ENCODE measurements at regions of chr2 and their contacts with region 1.

Region 1: DNA sequence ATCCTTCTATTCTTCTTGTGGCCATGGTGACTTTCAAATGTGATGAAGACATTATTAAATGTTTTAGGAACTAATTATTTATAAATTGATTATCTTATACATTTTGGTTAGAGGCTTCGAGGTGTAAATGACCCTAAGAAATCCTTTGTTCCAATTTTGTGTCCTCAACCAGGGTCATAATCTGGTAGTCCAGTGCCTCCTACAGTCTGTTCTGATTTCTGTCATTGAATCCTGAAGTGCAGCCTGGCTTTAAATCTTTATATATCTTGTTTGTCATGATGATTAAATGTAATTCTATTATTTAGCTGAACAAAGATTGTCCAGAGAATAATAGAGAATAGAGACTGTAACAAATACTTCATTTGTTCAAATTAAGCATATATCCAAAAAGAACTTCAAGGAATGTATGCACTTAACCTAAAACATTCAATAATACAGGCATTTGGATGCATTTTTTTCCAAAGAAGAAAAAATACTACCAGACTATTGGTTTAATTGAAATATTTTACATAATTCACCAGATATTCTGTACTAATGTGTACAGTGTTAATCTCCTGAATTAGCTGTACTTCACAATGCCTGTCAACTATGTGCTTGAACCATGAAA is 89.8 kb downstream of the PRPF40A start:
- DNase-seq: peak; percentile 64
- H3K4me3 ChIP-seq: no peak overlapping the region
- H3K27ac ChIP-seq: no peak overlapping the region
- H3K4me1 ChIP-seq: no peaks in the 10 kb centered on the region
- H3K27me3 ChIP-seq: no peaks in the 10 kb centered on the region
- CTCF ChIP-seq: peak; percentile 43 to 46
- POLR2A ChIP-seq: no peak

Region 2: DNA sequence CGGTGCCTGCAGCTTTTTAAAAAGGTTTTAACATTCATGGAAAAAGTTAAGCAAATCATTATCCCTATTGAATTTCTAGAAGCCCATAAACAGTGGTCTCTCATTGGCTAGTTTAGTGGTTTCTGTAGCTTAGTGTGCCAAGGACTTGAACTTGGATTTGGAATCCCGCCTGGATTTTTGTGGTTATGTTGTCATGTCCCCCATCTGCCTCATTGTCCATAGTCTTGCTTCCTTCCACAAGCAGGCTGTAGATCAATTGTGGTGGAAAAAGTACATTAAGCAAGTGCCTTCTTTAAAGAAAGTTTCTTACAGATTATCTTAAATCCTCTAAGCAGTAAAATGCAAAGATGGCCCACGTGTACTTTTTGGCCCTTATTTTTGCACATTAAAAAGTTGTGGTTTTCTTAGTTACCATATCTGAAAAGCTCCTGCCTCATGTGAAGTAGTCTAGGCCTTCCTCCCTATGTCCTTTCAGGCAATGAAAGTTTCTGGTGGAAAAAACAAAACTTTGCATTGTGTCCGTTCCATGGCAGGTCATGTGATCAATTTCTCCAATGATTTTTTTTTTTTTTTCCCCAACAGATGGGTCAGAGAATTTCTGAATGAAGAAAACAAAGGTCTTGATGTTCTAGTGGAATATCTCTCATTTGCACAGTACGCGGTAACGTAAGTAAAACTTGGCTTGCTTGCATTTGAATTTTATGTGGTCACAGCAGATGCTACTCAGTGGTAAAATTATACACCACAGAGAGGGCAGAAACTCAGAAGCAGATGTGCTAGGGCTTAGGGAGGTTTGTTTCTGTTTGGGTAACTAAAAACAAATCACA is 69.1 kb before region 1 on chr2:
- CTCF ChIA-PET with region 1: no interaction called
- POLR2A ChIA-PET with region 1: no interaction called
- dilution Hi-C with region 1: no loop called
- intact Hi-C with region 1: loop called (anchors 2 kb)
- DNase-seq: no peak
- H3K4me3 ChIP-seq: no peak overlapping the region
- H3K27ac ChIP-seq: no peak overlapping the region
- H3K4me1 ChIP-seq: no peaks in the 10 kb centered on the region
- H3K27me3 ChIP-seq: no peaks in the 10 kb centered on the region
- CTCF ChIP-seq: no peak
- POLR2A ChIP-seq: no peak

Measured in endothelial cell of umbilical vein (primary cell).